ENCODE measurements at regions of chr16 and their contacts with region 1.

Region 1: DNA sequence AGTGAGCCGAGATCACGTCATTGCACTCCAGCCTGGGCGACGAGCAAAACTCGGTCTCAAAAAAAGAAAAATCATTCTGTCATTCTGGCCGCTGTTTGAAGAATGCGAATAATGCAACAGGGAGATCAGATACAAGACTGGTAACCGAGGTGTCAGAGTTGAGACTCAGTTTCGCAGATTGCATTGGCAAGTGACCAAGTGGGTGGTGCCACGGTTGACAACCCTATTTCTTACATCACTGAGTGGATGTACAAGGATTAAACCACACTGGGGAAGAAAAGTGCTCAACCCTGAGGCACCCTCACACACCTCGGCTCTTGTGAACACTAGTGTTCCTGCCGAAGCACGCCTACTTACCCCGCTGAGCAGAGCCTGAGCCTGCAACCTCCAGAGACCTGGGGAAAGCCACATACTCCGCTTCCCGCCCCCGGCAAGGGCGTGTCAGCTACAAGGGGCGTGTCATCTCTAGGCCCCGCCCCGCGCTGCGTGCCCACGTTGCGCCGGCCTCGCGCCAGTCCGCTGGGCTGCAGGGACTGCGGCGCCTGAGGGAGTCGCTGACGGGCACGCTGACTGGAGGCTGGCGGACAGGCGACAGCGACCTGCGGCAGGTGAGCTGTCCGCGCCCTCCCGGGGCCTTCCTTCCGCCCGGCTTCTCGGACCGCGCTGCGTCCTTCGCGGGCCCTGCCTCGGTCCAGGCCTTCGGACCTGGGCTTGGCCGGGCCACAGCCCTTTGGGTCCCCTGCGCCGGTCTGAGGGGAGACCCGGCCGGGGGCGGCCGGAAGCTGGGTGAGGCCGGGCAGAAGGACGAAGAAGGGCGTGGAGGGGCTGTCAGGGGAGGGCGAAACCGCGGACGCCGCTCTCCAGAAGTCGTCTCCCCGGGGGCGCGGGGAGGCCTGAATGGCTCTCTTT is at the start of gene HMOX2:
- DNase-seq: peak; percentile 86 to 90 (median 88)
- H3K4me3 ChIP-seq: peak within 1 kb of the TSS; percentile 67 to 91 (median 85)
- H3K4me3 Mint-ChIP-seq: peak within 1 kb of the TSS; percentile 80 to 87
- H3K27ac ChIP-seq: peak within 1 kb of the TSS; percentile 3 to 77
- H3K27ac Mint-ChIP-seq: peak within 1 kb of the TSS; percentile 70 to 90 (median 85)
- H3K4me1 ChIP-seq: peaks cover 43 to 50% of the 10 kb centered on the region in 2 donors
- H3K4me1 Mint-ChIP-seq: peaks cover 43% of the 10 kb centered on the region
- H3K27me3 ChIP-seq: no peaks in the 10 kb centered on the region
- H3K27me3 Mint-ChIP-seq: peaks cover 0 to 1% (median 0%) of the 10 kb centered on the region in 3 donors
- CTCF ChIP-seq: peak; percentile 40
- polyA plus RNA-seq, gene HMOX2: 21.7 to 33.2 (median 25.0) TPM

Region 2: GRCh38 chr16:4416200-4417032 is 59.7 kb before region 1 on chr16 and contains the start of gene CORO7:
- intact Hi-C with region 1: loop called in 1 of 2 experiments (anchors 5 kb)
- DNase-seq: peak; percentile 85 to 93 (median 87)
- H3K4me3 ChIP-seq: peak within 1 kb of the TSS; percentile 67 to 96 (median 86)
- H3K4me3 Mint-ChIP-seq: peak within 1 kb of the TSS; percentile 97 to 98
- H3K27ac ChIP-seq: peak within 1 kb of the TSS; percentile 86 to 96
- H3K27ac Mint-ChIP-seq: peak within 1 kb of the TSS; percentile 95 to 99 (median 97)
- H3K4me1 ChIP-seq: peaks cover 50 to 62% of the 10 kb centered on the region in 2 donors
- H3K4me1 Mint-ChIP-seq: peaks cover 54% of the 10 kb centered on the region
- H3K27me3 ChIP-seq: no peaks in the 10 kb centered on the region
- H3K27me3 Mint-ChIP-seq: peaks cover 0 to 4% (median 0%) of the 10 kb centered on the region in 3 donors
- CTCF ChIP-seq: no peak
- polyA plus RNA-seq, gene CORO7: 44.7 to 181 (median 68.4) TPM

Region 3: DNA sequence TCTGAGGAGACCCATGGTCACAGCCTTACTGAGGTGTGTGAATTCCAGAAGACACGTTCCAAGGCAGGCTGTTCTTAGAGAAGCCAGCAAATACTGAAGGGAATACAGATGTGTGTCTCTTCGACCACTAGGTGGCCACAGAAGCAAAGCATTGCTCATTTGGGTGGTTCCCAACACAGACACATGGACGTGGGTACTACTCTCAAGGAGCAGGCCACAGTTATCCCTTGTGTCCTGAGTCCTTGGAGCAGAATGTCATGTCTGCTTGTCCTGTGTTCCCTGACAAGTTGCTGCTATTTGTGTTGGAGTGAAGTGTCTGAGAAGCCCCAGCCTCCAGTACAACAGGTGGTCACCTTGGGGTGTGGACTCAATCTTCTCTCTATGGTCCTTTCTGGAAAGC is 30.3 kb after region 1 on chr16:
- intact Hi-C with region 1: loop called in 1 of 2 experiments (anchors 2 kb)
- DNase-seq: peak; percentile 76 to 84 (median 83)
- H3K4me3 ChIP-seq: no peak overlapping the region
- H3K4me3 Mint-ChIP-seq: no peak overlapping the region
- H3K27ac ChIP-seq: peak overlapping the region in 1 of 2 donors; percentile 84
- H3K27ac Mint-ChIP-seq: peak overlapping the region in 6 of 7 donors; percentile 80 to 96 (median 90)
- H3K4me1 ChIP-seq: peaks cover 32 to 38% of the 10 kb centered on the region in 2 donors
- H3K4me1 Mint-ChIP-seq: peaks cover 40% of the 10 kb centered on the region
- H3K27me3 ChIP-seq: no peaks in the 10 kb centered on the region
- H3K27me3 Mint-ChIP-seq: peaks cover 0 to 2% (median 2%) of the 10 kb centered on the region in 3 donors
- CTCF ChIP-seq: peak; percentile 91

Region 4: GRCh38 chr16:4538350-4539235 is 62.5 kb after region 1 on chr16 and contains the start of gene CDIP1:
- intact Hi-C with region 1: loop called in 1 of 2 experiments (anchors 2 kb)
- DNase-seq: peak; percentile 94 to 99 (median 99)
- H3K4me3 ChIP-seq: peak within 1 kb of the TSS; percentile 52 to 83 (median 57)
- H3K4me3 Mint-ChIP-seq: peak within 1 kb of the TSS; percentile 72 to 86
- H3K27ac ChIP-seq: peak within 1 kb of the TSS; percentile 77 to 87
- H3K27ac Mint-ChIP-seq: peak within 1 kb of the TSS; percentile 38 to 87 (median 80)
- H3K4me1 ChIP-seq: peaks cover 12 to 19% of the 10 kb centered on the region in 2 donors
- H3K4me1 Mint-ChIP-seq: peaks cover 22% of the 10 kb centered on the region
- H3K27me3 ChIP-seq: peaks cover 0 to 4% of the 10 kb centered on the region in 2 donors
- H3K27me3 Mint-ChIP-seq: peaks cover 9 to 12% (median 10%) of the 10 kb centered on the region in 3 donors
- CTCF ChIP-seq: no peak
- polyA plus RNA-seq, gene CDIP1: 8.6 to 11.2 (median 10.8) TPM

Region 5: DNA sequence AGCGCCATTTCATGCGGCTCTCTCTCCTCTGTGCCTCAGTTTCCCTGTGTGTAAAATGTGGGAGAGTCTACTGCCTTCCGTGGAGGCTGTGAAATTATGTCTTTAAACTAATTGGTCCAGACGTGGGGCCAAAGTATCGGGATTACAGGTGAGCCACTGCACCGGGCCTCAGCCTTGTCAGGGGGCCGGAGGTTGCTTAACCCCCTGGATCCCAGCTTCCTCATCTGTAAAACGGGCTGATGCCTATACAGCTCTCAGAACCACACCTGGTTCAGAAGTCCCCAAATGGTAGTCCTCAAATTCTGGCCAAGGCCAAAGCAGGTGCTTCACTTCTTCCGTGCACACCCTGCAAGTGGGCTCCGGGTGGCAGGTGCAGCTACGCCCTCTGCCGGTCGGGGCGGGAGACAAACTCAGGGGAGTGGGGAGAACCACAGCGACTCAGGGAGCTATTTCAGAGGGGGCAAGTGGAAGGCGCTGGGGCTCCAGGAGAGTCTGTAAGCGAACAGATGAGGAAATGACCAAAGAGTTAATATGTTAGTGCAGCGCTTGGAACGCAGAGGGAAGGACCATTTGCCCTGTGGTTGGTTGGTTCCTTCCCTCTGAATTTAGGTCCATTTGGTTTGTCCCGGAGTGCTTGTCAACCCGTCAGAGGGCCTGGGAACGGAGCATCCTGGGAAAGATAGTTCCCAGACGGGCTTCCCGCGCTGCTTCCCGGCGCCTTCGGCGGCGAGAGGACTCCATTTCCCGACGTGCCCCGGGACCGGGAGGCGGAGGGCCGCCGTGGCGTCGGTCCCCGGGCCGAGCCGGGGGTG is 148.1 kb after region 1 on chr16 and contains the start of gene MGRN1:
- intact Hi-C with region 1: loop called in 1 of 2 experiments (anchors 10 kb)
- DNase-seq: peak; percentile 92 to 96 (median 96)
- H3K4me3 ChIP-seq: peak within 1 kb of the TSS; percentile 61 to 96 (median 87)
- H3K4me3 Mint-ChIP-seq: peak within 1 kb of the TSS; percentile 100
- H3K27ac ChIP-seq: peak within 1 kb of the TSS; percentile 94 to 98
- H3K27ac Mint-ChIP-seq: peak within 1 kb of the TSS; percentile 99 to 100 (median 100)
- H3K4me1 ChIP-seq: peaks cover 38 to 51% of the 10 kb centered on the region in 2 donors
- H3K4me1 Mint-ChIP-seq: peaks cover 50% of the 10 kb centered on the region
- H3K27me3 ChIP-seq: no peaks in the 10 kb centered on the region
- H3K27me3 Mint-ChIP-seq: no peaks in the 10 kb centered on the region
- CTCF ChIP-seq: peak; percentile 95
- polyA plus RNA-seq, gene MGRN1: 3.7 to 48.2 (median 4.7) TPM

Measured in CD14-positive monocyte (primary cell).